ENCODE measurements at regions of chr14 and their contacts with region 1.

Region 1: DNA sequence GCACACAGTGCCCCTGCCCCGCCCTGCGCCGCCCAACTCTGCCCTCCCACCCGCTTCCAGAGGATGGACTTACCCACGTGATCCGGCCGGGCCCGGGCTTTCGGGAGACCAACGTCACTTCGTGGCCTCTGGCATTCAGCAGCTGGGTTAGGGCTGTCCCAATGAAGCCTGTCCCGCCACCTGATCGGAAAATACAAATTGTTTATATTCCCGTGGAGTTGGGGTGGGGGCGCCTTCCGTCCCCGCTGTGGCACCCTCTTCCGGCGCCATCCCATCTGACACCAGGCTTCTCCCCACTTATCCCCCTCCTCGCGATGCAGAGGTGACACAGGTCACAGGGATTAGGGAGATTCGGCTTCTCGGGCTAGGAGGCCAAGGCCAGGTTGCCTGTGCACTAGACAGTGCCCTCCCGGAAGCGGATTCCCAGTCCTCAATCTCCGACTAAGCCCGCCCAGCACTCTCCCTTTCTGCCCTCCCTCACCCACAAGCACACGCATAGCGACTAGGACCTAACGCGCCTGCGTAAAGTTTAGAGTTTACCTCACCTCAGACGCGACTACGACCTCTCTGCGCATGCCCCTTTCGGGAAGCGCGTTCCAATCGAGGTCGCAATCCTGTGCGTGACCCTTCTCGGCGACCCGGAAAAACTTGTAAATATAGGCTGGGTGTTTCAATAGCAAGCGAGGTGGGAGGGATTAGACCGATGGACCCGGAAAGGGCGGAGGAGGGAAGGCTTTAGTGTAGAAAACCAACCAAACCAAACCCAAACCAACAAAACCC is at the start of gene SDR39U1:
- DNase-seq: peak; percentile 96

Region 2: GRCh38 chr14:24259252-24259995 is 183.0 kb before region 1 on chr14:
- CTCF ChIA-PET with region 1: no interaction called
- POLR2A ChIA-PET with region 1: no interaction called
- DNase-seq: no peak

Region 3: DNA sequence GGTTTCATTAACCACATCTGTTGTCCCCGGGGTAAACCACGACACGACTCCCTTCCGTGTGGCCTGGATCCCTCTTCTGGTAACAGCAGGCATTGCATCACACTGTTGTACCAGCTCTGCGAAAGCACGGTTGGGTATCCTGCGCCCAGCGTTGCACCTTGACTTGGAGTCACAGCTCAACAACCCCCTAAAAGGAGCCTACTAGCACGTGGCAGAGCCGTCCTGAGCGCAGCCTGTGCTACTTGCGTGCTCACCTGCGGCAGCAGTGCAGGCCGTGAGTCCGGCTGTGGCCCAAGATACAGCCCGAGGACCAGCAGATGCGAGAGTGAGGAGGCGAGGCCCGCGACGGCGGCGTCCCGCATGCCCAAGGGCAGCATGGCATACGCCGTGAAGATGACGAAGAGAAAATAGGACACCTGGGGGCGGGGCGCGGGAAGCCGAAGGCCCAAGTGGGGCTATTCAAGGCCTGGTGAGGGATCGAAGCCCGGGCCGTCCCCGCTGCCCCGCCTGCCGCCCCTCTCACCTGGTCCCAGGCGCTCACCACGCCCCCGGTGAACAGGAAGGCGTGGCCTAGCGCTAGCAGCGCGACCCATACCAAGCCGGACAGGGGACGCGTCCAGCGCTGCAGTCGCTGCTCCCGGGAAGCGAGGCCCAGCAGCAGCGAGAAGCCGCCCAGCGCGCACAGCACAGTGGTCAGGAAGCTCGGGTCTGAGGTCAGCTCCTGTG is 110.0 kb before region 1 on chr14:
- CTCF ChIA-PET with region 1: interaction called, 25 read pairs
- POLR2A ChIA-PET with region 1: interaction called, 8 read pairs
- DNase-seq: peak; percentile 71

Region 4: DNA sequence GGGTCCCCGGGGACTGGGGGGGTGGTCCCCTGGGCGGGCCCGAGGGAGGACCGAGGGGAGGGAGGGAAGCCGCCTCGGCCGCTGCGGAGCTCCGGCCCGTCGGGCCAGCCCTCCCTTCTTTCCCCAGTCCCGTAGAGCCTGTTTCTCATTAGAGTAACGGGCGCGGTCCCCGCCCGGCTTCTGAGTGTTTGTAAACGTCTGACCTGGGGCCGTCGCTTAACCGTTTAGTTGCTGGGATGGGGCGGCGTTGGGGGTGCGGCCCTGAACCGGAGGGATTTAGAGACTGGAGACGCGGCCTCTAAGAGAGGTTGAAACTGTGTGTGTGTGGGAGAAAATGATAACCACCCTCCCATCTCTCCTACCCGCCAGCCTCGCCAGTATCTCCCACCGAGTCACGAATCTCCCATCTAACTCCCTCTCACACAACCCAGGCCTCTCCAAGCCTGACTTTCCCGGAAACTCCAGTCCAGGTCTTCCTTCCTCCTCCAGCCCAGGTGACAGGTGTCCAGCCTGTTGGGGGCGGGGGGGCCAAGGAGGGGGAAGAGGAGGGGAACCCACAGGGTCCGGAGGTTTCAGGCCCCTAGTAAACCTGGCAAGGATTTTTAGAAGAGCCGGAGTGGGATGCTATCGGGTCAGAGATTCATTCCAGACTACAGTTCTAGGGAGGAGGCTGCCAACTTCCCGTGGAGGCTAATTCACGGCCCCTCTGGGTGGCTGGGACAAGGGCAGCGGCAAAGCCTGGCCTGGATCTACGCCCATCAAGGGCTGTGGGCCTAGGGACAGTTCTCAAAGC is 75.5 kb before region 1 on chr14:
- CTCF ChIA-PET with region 1: interaction called, 19 read pairs
- POLR2A ChIA-PET with region 1: interaction called, 11 read pairs
- DNase-seq: peak; percentile 74

Region 5: GRCh38 chr14:24458736-24459135 is 16.3 kb after region 1 on chr14:
- CTCF ChIA-PET with region 1: no interaction called
- POLR2A ChIA-PET with region 1: interaction called, 14 read pairs
- DNase-seq: no peak